Breast epithelium (tissue), 4 donors: ENCODE measurements at regions of chr3 and their contacts with region 1.

Region 1: GRCh38 chr3:19735111-19735510 is 198.9 kb downstream of the EFHB start:
- DNase-seq: no peak
- H3K4me3 ChIP-seq: no peak overlapping the region
- H3K27ac ChIP-seq: no peak overlapping the region
- H3K4me1 ChIP-seq: no peaks in the 10 kb centered on the region
- H3K27me3 ChIP-seq: no peaks in the 10 kb centered on the region
- CTCF ChIP-seq: no peak
- POLR2A ChIP-seq: no peak

Region 2: DNA sequence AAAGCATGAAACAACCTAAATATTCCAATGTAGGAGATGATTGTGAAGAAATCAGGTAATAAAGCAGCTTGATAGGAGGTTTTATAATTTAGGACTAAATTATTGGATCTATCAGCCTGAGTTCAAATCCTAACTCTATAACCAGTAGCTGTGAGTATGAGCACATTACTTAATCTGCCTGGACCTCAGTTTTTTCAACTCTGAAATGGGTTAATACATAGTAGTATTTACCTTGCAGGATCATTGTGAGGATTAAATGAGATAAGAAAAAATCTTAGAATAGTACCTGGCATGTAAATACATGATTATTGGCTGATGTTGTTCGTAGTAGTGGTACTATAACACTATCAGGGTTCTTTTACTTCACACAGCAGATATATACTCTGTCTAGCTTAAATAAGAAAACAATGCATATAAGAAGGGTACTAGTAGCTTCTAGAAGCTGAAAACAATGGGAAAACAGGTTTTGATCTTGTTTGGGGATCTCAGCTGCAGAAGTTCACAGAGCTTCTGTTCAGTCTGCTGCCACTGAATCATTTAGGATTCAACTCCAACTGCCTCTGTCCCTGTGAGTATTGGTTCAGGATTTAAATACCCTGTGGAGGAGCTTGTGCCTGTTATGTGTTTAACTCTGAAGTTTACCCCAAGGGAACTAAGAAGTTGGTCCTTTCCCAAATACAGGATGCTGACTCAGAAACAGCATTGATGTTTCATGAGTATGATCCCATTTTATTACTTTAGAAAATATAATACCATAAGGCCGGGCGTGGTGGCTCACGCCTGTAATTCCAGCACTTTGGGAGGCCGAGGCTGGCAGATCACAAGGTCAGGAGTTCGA is 339.3 kb after region 1 on chr3:
- intact Hi-C with region 1: loop called (anchors 5 kb)
- DNase-seq: no peak
- H3K4me3 ChIP-seq: no peak overlapping the region
- H3K27ac ChIP-seq: peak overlapping the region; percentile 61 to 67
- H3K4me1 ChIP-seq: peaks cover 0 to 4% of the 10 kb centered on the region in 2 donors
- H3K27me3 ChIP-seq: no peaks in the 10 kb centered on the region
- CTCF ChIP-seq: no peak
- POLR2A ChIP-seq: no peak